Right cardiac atrium (tissue), 5 donors: ENCODE measurements at regions of chr15 and their contacts with region 1.

Region 1: GRCh38 chr15:64851503-64851840 is 9.8 kb downstream of the PLEKHO2 start:
- DNase-seq: peak in 1 of 3 donors; percentile 47
- ATAC-seq: peak; percentile 47 to 49
- H3K4me3 ChIP-seq: no peak overlapping the region
- H3K27ac ChIP-seq: peak overlapping the region; percentile 50
- H3K4me1 ChIP-seq: peaks cover 42% of the 10 kb centered on the region
- H3K27me3 ChIP-seq: no peaks in the 10 kb centered on the region

Region 2: DNA sequence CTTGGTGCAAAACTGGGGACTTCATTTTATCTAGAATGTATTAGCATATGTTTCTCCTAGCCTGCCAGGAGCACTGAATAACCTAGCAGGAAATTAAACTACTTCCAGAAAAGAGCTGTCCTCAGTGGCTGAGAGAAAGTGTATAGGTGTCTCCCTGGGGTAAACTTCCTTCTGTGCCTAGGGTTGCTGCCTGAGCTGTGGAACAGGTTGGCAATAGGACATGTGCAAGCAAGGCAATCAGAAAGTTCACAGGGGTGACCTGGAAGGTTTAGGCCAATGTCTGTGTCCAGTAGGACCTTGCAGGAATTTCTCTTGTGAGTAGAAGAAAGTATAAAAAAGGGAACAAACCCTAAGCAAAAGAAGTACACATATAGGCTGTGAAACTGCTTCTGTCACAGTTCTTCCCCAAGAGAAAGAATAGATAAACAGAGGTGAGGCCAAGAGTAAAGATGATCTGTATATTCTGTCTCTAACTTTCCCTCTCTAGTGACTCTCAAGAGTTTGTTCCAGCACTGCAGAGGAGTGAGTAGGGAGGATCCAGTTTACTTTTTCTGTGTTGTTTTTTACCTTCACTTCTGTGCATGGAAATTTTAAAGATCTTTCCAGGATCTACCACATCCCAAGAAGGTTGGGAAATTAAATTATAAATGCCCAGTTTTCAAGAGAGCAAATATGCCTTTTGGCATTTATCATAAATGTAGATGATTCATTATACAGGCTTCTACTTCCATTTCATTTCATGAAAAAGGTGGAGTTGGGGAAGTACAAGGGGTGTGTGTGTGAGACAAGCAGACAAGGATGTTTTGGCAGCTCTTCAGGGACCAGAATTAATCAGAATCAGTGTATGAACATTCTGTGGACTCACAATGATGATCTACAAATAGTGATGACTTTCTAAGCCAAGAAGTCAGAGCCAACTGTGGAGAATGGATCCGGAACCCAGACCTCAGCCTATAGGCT is 231.3 kb before region 1 on chr15:
- intact Hi-C with region 1: no loop called
- DNase-seq: no peak
- ATAC-seq: peak in 1 of 2 donors; percentile 43
- H3K4me3 ChIP-seq: no peak overlapping the region
- H3K27ac ChIP-seq: no peak overlapping the region
- H3K4me1 ChIP-seq: peaks cover 6% of the 10 kb centered on the region
- H3K27me3 ChIP-seq: no peaks in the 10 kb centered on the region

Region 3: GRCh38 chr15:64905119-64905831 is 53.8 kb after region 1 on chr15:
- intact Hi-C with region 1: loop called in 1 of 4 experiments (anchors 5 kb)
- DNase-seq: peak; percentile 84 to 95 (median 93)
- ATAC-seq: peak; percentile 92 to 94
- H3K4me3 ChIP-seq: peak overlapping the region; percentile 11
- H3K27ac ChIP-seq: no peak overlapping the region
- H3K4me1 ChIP-seq: no peaks in the 10 kb centered on the region
- H3K27me3 ChIP-seq: no peaks in the 10 kb centered on the region